PC-3 (cell line): ENCODE measurements at regions of chr4 and their contacts with region 1.

Region 1: GRCh38 chr4:51870441-51871188 is 27.7 kb downstream of the DCUN1D4 start:
- DNase-seq: peak; percentile 78
- ATAC-seq: peak; percentile 85
- H3K4me3 ChIP-seq: no peak overlapping the region
- H3K27ac ChIP-seq: peak overlapping the region; percentile 57
- H3K4me1 ChIP-seq: peaks cover 27% of the 10 kb centered on the region
- H3K27me3 ChIP-seq: no peaks in the 10 kb centered on the region
- CTCF ChIP-seq: no peak

Region 2: DNA sequence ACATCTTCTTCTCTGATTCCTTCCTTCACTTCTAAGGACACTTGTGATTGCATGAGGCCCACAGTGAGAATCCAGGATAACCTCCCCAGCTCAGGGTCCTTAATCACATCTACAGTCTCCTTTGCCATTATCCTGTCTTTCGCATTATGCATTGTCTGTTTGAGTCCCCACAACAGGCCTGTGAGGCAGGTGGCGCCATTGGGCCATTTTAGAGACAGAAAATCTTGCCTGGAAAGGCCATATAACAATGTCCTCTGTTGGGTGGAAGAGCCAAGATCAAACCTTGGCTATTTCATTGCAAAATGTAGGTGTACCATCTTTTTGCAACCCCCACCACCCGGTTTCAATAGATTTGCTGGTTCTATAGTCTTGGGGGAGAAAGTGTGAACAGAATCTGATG is 39.5 kb before region 1 on chr4:
- CTCF ChIA-PET with region 1: no interaction called
- POLR2A ChIA-PET with region 1: no interaction called
- intact Hi-C with region 1: loop called (anchors 1 kb)
- DNase-seq: peak; percentile 82
- ATAC-seq: peak; percentile 98
- H3K4me3 ChIP-seq: no peak overlapping the region
- H3K27ac ChIP-seq: no peak overlapping the region
- H3K4me1 ChIP-seq: no peaks in the 10 kb centered on the region
- H3K27me3 ChIP-seq: no peaks in the 10 kb centered on the region
- CTCF ChIP-seq: peak; percentile 95

Region 3: GRCh38 chr4:51842554-51843308 is 27.9 kb before region 1 on chr4 and contains the start of gene DCUN1D4:
- CTCF ChIA-PET with region 1: interaction called, 15 read pairs
- POLR2A ChIA-PET with region 1: interaction called, 3 read pairs
- intact Hi-C with region 1: loop called (anchors 1 kb)
- DNase-seq: peak; percentile 100
- ATAC-seq: peak; percentile 87
- H3K4me3 ChIP-seq: peak within 1 kb of the TSS; percentile 80
- H3K27ac ChIP-seq: peak within 1 kb of the TSS; percentile 77
- H3K4me1 ChIP-seq: peaks cover 25% of the 10 kb centered on the region
- H3K27me3 ChIP-seq: no peaks in the 10 kb centered on the region
- CTCF ChIP-seq: peak; percentile 16; the same call in 1 of the 2 replicates
- total RNA-seq, gene DCUN1D4: 25.5 and 44.8 TPM in 2 replicates